ENCODE measurements at regions of chr12 and their contacts with region 1.

Region 1: DNA sequence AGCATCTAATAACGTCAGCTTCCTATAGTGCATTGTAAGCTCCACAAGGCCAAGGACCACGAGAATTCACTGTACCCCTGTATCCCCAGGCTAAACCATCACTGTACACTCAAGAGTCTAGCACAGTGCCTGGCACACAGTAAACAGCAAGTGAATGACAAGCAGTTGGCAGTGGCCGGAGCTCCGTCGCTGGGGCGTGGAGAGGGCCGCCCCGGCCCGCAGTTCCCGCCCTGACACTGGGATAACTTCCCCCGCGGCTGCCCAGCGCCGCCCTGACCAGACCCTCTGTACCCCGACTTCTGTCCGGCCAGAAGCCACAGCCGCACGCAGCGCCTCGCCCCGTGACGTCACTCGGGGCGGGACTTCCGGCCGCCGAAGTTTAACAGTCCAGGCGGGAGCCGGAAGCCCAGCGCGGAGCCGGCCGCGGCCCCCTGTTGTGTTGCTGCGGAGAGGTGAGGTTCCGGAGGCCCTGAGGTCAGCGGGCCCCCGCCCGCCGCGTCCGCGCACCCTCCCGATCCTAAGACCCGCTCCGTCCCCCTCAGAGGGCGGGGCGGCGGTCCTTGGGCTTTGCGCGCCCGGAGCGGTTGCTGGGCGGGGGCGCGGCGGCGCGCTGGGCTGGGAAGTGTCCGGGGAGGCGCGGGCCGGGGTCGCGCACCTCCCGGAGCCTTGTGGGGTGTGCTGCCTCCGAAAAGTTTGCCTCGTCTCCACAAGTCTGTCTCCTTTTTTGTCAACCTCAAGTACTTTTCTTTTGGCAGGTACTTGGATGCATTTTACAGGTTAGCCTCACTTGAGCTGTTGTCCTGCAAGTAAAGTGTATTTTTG is at the start of gene NEDD1:
- DNase-seq: peak; percentile 96
- H3K4me3 Mint-ChIP-seq: peak within 1 kb of the TSS; percentile 97
- H3K27ac Mint-ChIP-seq: peak within 1 kb of the TSS; percentile 98
- H3K4me1 Mint-ChIP-seq: peaks cover 44% of the 10 kb centered on the region
- H3K27me3 Mint-ChIP-seq: peaks cover 10% of the 10 kb centered on the region
- total RNA-seq, gene NEDD1: 58.8 and 62.7 TPM in 2 replicates

Region 2: DNA sequence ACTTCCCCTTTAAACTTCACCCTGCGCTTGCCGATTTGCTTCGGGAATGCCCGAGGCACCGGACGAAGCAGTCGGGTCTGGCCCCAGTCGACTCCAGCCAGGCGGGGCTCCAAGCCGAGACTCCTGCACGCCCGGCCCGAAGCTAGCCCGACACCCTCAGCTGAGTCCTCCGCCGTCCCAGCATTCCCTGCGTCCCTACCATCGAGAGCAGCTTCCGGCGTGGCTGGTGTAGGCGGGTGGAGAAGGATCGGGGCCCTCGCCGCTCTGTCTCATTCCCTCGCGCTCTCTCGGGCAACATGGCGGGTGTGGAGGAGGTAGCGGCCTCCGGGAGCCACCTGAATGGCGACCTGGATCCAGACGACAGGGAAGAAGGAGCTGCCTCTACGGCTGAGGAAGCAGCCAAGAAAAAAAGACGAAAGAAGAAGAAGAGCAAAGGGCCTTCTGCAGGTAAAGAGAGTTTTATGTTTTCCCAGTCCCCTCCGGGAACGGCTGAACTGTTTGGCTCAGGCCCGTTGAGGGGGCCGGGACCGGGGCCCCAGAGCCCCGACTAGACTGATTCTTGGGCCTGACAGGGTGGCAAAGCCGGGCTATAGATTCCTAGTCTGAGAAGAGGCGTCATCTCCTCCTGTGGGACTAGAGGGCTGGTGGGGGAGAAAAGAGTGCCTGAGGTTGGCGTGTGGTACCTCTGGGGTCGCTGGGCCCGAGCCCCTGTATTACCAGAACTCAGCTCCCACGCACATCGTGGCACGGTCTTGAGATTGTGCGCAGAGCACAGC is 1433.0 kb before region 1 on chr12 and contains the start of gene METAP2:
- intact Hi-C with region 1: loop called (anchors 10 kb)
- DNase-seq: peak; percentile 97
- H3K4me3 Mint-ChIP-seq: peak within 1 kb of the TSS; percentile 94
- H3K27ac Mint-ChIP-seq: peak within 1 kb of the TSS; percentile 100
- H3K4me1 Mint-ChIP-seq: peaks cover 32% of the 10 kb centered on the region
- H3K27me3 Mint-ChIP-seq: no peaks in the 10 kb centered on the region
- total RNA-seq, gene METAP2: 125 and 133 TPM in 2 replicates

Region 3: DNA sequence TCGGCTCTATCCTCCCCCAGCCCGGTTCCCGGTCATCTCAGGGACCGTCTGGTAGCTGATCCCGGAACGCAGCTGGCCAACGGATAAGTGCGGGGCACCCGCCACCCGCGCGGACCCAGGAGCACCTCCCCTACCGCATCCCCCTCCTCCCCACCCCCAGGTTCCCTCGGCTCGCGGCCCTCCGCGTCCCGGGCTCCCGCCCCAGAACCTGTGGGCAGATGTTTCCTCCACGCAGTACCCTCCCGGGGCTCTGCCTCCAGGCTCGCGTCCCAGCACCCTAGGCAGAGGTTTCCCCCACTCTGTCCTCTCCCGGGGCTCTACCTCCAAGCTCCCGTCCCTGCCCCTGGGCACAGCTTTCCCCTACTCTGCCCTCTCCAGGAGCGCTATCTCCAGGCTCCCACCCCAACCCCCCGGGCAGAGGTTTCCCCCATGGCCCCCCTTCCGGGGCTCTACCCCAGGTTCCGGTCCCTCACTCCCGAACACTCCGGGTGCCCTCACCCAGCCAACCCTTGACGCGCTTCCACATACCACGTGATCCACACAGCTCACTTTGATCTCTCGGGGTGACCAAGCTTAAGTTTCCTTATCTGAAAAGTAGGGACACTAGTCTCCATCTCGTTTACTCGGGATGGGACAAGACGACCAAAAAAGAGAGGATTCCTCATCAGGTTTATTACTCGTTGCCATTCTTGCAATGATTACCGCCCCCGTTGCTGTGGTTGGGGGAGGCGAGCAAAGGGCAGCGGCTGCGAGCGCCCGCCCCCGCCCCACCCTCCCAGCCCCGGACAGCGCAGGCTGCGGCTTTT is 964.3 kb before region 1 on chr12 and contains the start of gene CCDC38:
- intact Hi-C with region 1: loop called (anchors 5 kb)
- DNase-seq: peak; percentile 94
- H3K4me3 Mint-ChIP-seq: peak within 1 kb of the TSS; percentile 94
- H3K27ac Mint-ChIP-seq: peak within 1 kb of the TSS; percentile 90
- H3K4me1 Mint-ChIP-seq: peaks cover 8% of the 10 kb centered on the region
- H3K27me3 Mint-ChIP-seq: peaks cover 18% of the 10 kb centered on the region
- total RNA-seq, gene CCDC38: not detected in 2 replicates

Region 4: GRCh38 chr12:96194971-96195844 is 711.9 kb before region 1 on chr12:
- intact Hi-C with region 1: loop called (anchors 10 kb)
- DNase-seq: peak; percentile 91
- H3K4me3 Mint-ChIP-seq: peak overlapping the region; percentile 94
- H3K27ac Mint-ChIP-seq: peak overlapping the region; percentile 97
- H3K4me1 Mint-ChIP-seq: peaks cover 41% of the 10 kb centered on the region
- H3K27me3 Mint-ChIP-seq: no peaks in the 10 kb centered on the region

Region 5: DNA sequence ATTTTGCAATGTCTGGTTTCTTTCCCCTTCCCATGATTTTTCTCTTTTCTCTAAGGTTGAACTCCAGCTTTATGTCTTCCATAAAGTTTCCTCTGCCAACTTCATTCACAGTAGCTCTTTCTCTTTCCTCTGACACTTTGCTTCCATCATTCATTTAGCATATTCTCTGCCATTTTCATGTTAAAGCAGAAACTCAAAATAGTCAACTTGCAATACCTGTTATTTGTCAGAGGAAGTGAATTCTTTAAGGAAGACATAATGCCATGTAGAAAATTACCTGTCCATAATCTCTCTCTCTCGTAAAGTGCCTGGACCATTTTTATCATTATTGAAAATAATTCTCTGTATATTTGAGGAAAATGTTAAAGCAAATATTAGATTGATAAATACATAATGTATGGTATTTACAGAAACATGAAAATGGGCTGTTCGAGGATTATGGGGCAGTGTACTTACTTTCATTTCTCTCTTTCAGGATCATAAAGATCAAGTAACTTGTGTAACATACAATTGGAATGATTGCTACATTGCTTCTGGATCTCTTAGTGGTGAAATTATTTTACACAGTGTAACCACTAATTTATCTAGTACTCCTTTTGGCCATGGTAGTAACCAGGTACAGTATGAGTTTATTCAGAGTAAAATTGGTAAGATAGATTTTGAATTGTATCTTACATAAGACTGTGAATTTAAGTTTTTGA is 12.6 kb after region 1 on chr12:
- intact Hi-C with region 1: loop called (anchors 2 kb)
- DNase-seq: no peak
- H3K4me3 Mint-ChIP-seq: no peak overlapping the region
- H3K27ac Mint-ChIP-seq: peak overlapping the region; percentile 22
- H3K4me1 Mint-ChIP-seq: peaks cover 17% of the 10 kb centered on the region
- H3K27me3 Mint-ChIP-seq: no peaks in the 10 kb centered on the region

Region 6: DNA sequence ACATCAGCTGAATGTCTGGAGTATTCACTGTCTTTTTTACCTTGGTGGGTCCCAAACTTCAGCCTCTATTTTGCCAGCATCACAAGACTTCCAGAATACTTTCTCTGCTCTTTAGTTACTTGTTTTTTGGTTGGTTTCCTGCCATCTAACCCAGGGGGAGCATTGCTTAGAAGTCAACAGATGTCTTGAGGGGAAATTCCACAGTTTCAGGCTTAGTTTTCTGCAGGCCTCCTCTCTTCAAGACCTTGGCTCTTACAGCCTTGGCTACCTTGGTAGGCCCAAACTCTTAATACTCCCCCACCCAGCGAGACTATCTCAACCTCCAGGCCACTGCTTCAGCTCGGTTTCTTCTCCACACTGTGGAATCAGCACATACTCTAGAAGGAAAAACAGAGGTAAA is 41.7 kb after region 1 on chr12:
- intact Hi-C with region 1: no loop called
- DNase-seq: no peak
- H3K4me3 Mint-ChIP-seq: no peak overlapping the region
- H3K27ac Mint-ChIP-seq: no peak overlapping the region
- H3K4me1 Mint-ChIP-seq: peaks cover 4% of the 10 kb centered on the region
- H3K27me3 Mint-ChIP-seq: no peaks in the 10 kb centered on the region

Region 7: GRCh38 chr12:98397316-98398105 is 1490.5 kb after region 1 on chr12:
- intact Hi-C with region 1: loop called (anchors 10 kb)
- DNase-seq: peak; percentile 95
- H3K4me3 Mint-ChIP-seq: peak overlapping the region; percentile 72
- H3K27ac Mint-ChIP-seq: peak overlapping the region; percentile 10
- H3K4me1 Mint-ChIP-seq: peaks cover 35% of the 10 kb centered on the region
- H3K27me3 Mint-ChIP-seq: peaks cover 6% of the 10 kb centered on the region